T-cell (primary cell): ENCODE measurements at regions of chr1 and their contacts with region 1.

Region 1: GRCh38 chr1:184574588-184574987 is 180.1 kb downstream of the EDEM3 start:
- DNase-seq: no peak
- ATAC-seq: no peak
- H3K4me3 ChIP-seq: no peak overlapping the region
- H3K4me3 Mint-ChIP-seq: no peak overlapping the region
- H3K27ac ChIP-seq: no peak overlapping the region
- H3K27ac Mint-ChIP-seq: no peak overlapping the region
- H3K4me1 ChIP-seq: no peaks in the 10 kb centered on the region
- H3K4me1 Mint-ChIP-seq: no peaks in the 10 kb centered on the region
- H3K27me3 ChIP-seq: peaks cover 0 to 3% of the 10 kb centered on the region in 2 experiments
- H3K27me3 Mint-ChIP-seq: peaks cover 0 to 3% of the 10 kb centered on the region in 2 donors

Region 2: GRCh38 chr1:184088037-184088436 is 486.6 kb before region 1 on chr1:
- CTCF ChIA-PET with region 1: no interaction called
- POLR2A ChIA-PET with region 1: interaction called in 1 of 2 experiments, 10 read pairs
- DNase-seq: no peak
- ATAC-seq: no peak
- H3K4me3 ChIP-seq: no peak overlapping the region
- H3K4me3 Mint-ChIP-seq: no peak overlapping the region
- H3K27ac ChIP-seq: no peak overlapping the region
- H3K27ac Mint-ChIP-seq: no peak overlapping the region
- H3K4me1 ChIP-seq: no peaks in the 10 kb centered on the region
- H3K4me1 Mint-ChIP-seq: no peaks in the 10 kb centered on the region
- H3K27me3 ChIP-seq: no peaks in the 10 kb centered on the region
- H3K27me3 Mint-ChIP-seq: no peaks in the 10 kb centered on the region

Region 3: GRCh38 chr1:184555665-184556641 is 18.6 kb before region 1 on chr1:
- CTCF ChIA-PET with region 1: no interaction called
- POLR2A ChIA-PET with region 1: no interaction called
- DNase-seq: no peak
- ATAC-seq: no peak
- H3K4me3 ChIP-seq: no peak overlapping the region
- H3K4me3 Mint-ChIP-seq: no peak overlapping the region
- H3K27ac ChIP-seq: no peak overlapping the region
- H3K27ac Mint-ChIP-seq: no peak overlapping the region
- H3K4me1 ChIP-seq: no peaks in the 10 kb centered on the region
- H3K4me1 Mint-ChIP-seq: no peaks in the 10 kb centered on the region
- H3K27me3 ChIP-seq: peaks cover 0 to 2% of the 10 kb centered on the region in 2 experiments
- H3K27me3 Mint-ChIP-seq: peaks cover 3 to 10% of the 10 kb centered on the region in 2 donors

Region 4: DNA sequence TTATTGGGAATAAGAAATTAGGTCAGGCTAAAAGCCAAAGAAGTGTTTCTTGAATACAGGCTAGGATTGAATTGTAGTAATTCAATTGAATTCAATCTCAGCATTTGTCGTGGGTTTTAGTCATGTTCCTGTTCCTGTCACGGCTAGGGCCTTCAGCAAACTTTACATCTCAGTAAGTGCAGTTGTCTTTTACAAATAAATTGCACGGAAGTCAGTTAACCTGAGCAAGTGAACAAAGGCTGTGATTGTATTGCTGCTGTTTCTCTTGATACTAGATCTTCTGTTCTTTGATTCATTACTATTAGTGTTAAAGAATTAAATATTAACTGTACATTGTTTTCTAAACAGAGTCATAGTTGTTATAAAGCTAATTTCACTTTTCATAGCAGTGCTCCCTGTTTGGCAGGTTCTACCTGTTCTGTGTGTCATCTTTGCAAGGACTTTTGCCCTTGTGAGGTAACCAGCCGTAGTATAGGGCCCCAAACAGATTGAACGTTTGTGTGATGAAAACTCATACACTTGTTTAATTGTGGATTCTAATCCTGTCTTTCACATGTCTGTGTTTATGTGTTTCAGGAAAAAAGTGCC is 15.7 kb after region 1 on chr1:
- CTCF ChIA-PET with region 1: no interaction called
- POLR2A ChIA-PET with region 1: no interaction called
- DNase-seq: no peak
- ATAC-seq: no peak
- H3K4me3 ChIP-seq: no peak overlapping the region
- H3K4me3 Mint-ChIP-seq: no peak overlapping the region
- H3K27ac ChIP-seq: no peak overlapping the region
- H3K27ac Mint-ChIP-seq: no peak overlapping the region
- H3K4me1 ChIP-seq: no peaks in the 10 kb centered on the region
- H3K4me1 Mint-ChIP-seq: no peaks in the 10 kb centered on the region
- H3K27me3 ChIP-seq: no peaks in the 10 kb centered on the region
- H3K27me3 Mint-ChIP-seq: peaks cover 14 to 15% of the 10 kb centered on the region in 2 donors

Region 5: GRCh38 chr1:184649451-184649888 is 74.9 kb after region 1 on chr1:
- CTCF ChIA-PET with region 1: no interaction called
- POLR2A ChIA-PET with region 1: interaction called in 1 of 2 experiments, 15 read pairs
- DNase-seq: no peak
- ATAC-seq: no peak
- H3K4me3 ChIP-seq: no peak overlapping the region
- H3K4me3 Mint-ChIP-seq: no peak overlapping the region
- H3K27ac ChIP-seq: no peak overlapping the region
- H3K27ac Mint-ChIP-seq: no peak overlapping the region
- H3K4me1 ChIP-seq: no peaks in the 10 kb centered on the region
- H3K4me1 Mint-ChIP-seq: no peaks in the 10 kb centered on the region
- H3K27me3 ChIP-seq: peaks cover 0 to 21% of the 10 kb centered on the region in 2 experiments
- H3K27me3 Mint-ChIP-seq: peaks cover 14 to 31% of the 10 kb centered on the region in 2 donors

Region 6: GRCh38 chr1:184660462-184661191 is 86.0 kb after region 1 on chr1:
- CTCF ChIA-PET with region 1: interaction called in 1 of 2 experiments, 10 read pairs
- POLR2A ChIA-PET with region 1: no interaction called
- DNase-seq: no peak
- ATAC-seq: no peak
- H3K4me3 ChIP-seq: no peak overlapping the region
- H3K4me3 Mint-ChIP-seq: no peak overlapping the region
- H3K27ac ChIP-seq: no peak overlapping the region
- H3K27ac Mint-ChIP-seq: no peak overlapping the region
- H3K4me1 ChIP-seq: peaks cover 0 to 8% of the 10 kb centered on the region in 2 experiments
- H3K4me1 Mint-ChIP-seq: peaks cover 5 to 12% (median 6%) of the 10 kb centered on the region in 3 donors
- H3K27me3 ChIP-seq: peaks cover 0 to 14% of the 10 kb centered on the region in 2 experiments
- H3K27me3 Mint-ChIP-seq: peaks cover 11 to 21% of the 10 kb centered on the region in 2 donors

Region 7: GRCh38 chr1:184982002-184982954 is 407.7 kb after region 1 on chr1:
- CTCF ChIA-PET with region 1: no interaction called
- POLR2A ChIA-PET with region 1: no interaction called
- DNase-seq: peak; percentile 40 to 85 (median 67)
- ATAC-seq: peak; percentile 90 to 99 (median 92)
- H3K4me3 ChIP-seq: no peak overlapping the region
- H3K4me3 Mint-ChIP-seq: no peak overlapping the region
- H3K27ac ChIP-seq: no peak overlapping the region
- H3K27ac Mint-ChIP-seq: no peak overlapping the region
- H3K4me1 ChIP-seq: no peaks in the 10 kb centered on the region
- H3K4me1 Mint-ChIP-seq: peaks cover 0 to 7% (median 5%) of the 10 kb centered on the region in 3 donors
- H3K27me3 ChIP-seq: peaks cover 0 to 4% of the 10 kb centered on the region in 2 experiments
- H3K27me3 Mint-ChIP-seq: peaks cover 5 to 29% of the 10 kb centered on the region in 2 donors